ENCODE measurements at regions of chr19 and their contacts with region 1.

Region 1: DNA sequence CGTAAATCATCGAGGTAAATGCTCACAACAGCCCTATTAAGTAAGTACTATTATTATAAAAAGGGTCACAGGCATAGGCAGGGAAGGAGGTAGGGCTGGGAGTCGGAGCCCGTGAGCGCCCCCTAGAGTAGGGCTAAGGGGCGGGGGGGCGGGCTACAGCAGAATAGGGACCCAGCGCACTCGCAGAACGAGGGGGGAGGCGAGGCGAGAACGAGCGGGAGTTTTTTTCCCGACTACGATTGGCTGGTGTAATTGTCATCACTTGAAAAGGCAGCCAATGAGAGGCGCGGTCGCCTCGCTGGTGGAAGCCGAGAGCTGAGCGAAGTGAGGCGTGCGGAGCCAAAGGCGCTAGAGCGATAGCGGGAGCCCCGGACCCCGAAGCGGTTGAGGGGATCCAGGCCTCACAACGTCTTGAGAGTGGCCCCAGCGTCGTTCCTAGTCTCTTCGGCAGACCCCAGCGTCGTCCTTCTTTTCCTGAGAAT is 24.2 kb downstream of the KEAP1 start:
- DNase-seq: peak; percentile 87
- H3K27ac ChIP-seq: 0 out of 2 replicates have a peak overlapping the region, but pooled peaks have one; percentile 3
- CTCF ChIP-seq: peak; percentile 81

Region 2: DNA sequence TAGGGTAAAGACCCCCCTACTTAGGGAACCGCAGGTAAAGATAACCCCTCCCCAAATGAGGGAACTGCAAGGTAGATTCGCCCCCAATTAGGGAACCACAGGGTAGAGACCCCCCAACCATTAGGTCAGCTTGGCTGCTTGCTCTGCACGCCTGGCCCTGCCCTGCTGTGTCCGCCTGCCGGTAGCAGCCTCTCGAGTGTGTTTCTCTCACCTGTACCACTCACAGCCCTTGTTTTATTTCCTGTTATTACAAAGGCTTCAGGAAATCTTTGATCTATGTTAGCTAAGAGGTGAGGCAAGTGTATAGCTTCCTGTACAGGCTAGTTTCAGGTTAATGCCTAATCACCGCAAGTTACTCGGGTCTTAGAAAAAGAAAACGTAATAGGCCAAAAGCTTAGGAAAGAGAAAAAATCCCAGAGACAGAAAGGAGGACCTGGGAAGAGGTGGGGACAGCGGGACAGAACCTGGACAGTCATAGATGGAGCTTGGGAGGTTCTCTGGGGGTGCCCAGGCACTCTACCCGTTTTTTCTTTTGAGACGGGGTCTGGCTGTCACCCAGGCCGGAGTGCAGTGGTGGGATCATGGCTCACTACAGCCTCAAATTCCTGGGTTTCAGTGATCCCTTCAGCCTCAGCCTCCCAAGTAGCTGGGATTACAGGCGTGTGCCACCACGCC is 336.1 kb before region 1 on chr19:
- CTCF ChIA-PET with region 1: no interaction called
- POLR2A ChIA-PET with region 1: no interaction called
- DNase-seq: no peak
- H3K27ac ChIP-seq: no peak overlapping the region
- CTCF ChIP-seq: no peak

Region 3: GRCh38 chr19:10353793-10354391 is 125.1 kb before region 1 on chr19:
- CTCF ChIA-PET with region 1: no interaction called
- POLR2A ChIA-PET with region 1: no interaction called
- DNase-seq: peak; percentile 45
- H3K27ac ChIP-seq: no peak overlapping the region
- CTCF ChIP-seq: no peak

Region 4: GRCh38 chr19:10491472-10492047 is 12.6 kb after region 1 on chr19:
- CTCF ChIA-PET with region 1: interaction called, 12 read pairs
- POLR2A ChIA-PET with region 1: interaction called, 4 read pairs
- DNase-seq: no peak
- H3K27ac ChIP-seq: peak overlapping the region; percentile 30
- CTCF ChIP-seq: no peak

Region 5: GRCh38 chr19:10502524-10503001 is 23.6 kb after region 1 on chr19:
- CTCF ChIA-PET with region 1: no interaction called
- POLR2A ChIA-PET with region 1: no interaction called
- DNase-seq: peak; percentile 89
- H3K27ac ChIP-seq: peak overlapping the region; percentile 94
- CTCF ChIP-seq: no peak

Region 6: GRCh38 chr19:10543420-10544241 is 64.7 kb after region 1 on chr19 and contains the start of gene ATG4D:
- CTCF ChIA-PET with region 1: interaction called, 16 read pairs
- POLR2A ChIA-PET with region 1: no interaction called
- DNase-seq: peak; percentile 97
- H3K27ac ChIP-seq: peak within 1 kb of the TSS; percentile 82
- CTCF ChIP-seq: no peak

Region 7: GRCh38 chr19:10717356-10718204 is 238.6 kb after region 1 on chr19 and contains the start of gene DNM2:
- CTCF ChIA-PET with region 1: no interaction called
- POLR2A ChIA-PET with region 1: no interaction called
- DNase-seq: peak; percentile 100
- H3K27ac ChIP-seq: peak within 1 kb of the TSS; percentile 90
- CTCF ChIP-seq: peak; percentile 85

Measured in RWPE1 (cell line).